Mammary epithelial cell (primary cell): ENCODE measurements at regions of chr18 and their contacts with region 1.

Region 1: DNA sequence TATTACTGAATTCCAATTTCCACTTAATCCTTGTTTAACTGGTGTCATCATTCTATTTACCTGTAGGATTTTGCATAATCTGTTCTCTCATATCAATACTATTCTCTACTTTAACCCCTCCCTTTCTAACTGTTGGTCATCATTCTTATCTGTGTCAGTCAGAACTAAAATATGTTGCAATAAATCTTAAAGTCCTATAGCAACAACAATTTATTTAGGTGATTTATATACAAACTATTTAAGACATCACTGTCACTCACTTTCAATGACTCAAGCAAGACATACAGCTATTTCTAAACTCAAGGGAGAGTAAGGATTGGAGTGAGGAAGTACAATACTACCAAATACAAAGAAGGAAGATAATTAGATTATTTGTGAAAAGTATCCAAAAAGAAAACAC is 740.4 kb downstream of the DSC3 start:
- DNase-seq: peak; percentile 9
- H3K4me3 ChIP-seq: no peak overlapping the region
- H3K27ac ChIP-seq: no peak overlapping the region
- H3K4me1 ChIP-seq: no peaks in the 10 kb centered on the region
- H3K27me3 ChIP-seq: no peaks in the 10 kb centered on the region
- CTCF ChIP-seq: no peak

Region 2: GRCh38 chr18:30625977-30626376 is 323.8 kb after region 1 on chr18:
- CTCF ChIA-PET with region 1: interaction called, 10 read pairs
- dilution Hi-C with region 1: no loop called
- in situ Hi-C with region 1: no loop called
- intact Hi-C with region 1: no loop called
- DNase-seq: peak; percentile 61
- H3K4me3 ChIP-seq: no peak overlapping the region
- H3K27ac ChIP-seq: peak overlapping the region; percentile 12
- H3K4me1 ChIP-seq: peaks cover 6% of the 10 kb centered on the region
- H3K27me3 ChIP-seq: no peaks in the 10 kb centered on the region
- CTCF ChIP-seq: no peak